A549 (cell line): ENCODE measurements at regions of chr9 and their contacts with region 1.

Region 1: DNA sequence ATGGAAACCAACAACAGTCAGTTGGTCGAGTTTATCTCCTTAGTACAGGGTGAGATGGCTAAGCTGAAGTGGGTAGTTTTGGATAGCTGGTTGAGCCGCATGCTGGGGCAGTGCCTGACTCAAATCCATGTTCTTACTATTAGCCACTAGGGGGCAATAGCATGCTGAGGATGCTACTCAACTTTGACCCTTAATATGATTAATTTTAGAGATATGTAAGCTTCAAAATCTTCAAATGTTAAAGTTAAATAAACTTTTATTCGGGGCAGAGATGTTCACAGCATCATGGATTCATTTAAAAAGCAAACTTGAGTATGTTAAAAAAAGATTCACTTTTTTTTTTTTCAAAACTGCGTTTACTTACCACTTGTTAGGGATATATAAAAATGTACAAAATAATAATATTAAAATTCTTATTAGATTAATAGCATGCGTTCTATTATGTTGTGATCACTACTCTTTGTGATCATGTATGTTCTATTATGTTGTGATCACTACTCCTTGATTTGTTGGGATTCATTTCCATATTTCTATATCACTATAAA is 57.0 kb downstream of the C9orf153 start:
- DNase-seq: peak; percentile 60 to 64
- ATAC-seq: peak; percentile 95 to 97
- H3K4me3 ChIP-seq: no peak overlapping the region
- H3K27ac ChIP-seq: no peak overlapping the region
- H3K4me1 ChIP-seq: no peaks in the 10 kb centered on the region
- CTCF ChIP-seq: peak; percentile 84
- EP300 ChIP-seq: no peak
- POLR2A ChIP-seq: no peak
- RAD21 ChIP-seq: peak; percentile 76 to 80

Region 2: GRCh38 chr9:86098824-86099700 is 103.3 kb before region 1 on chr9 and contains the start of gene GOLM1:
- CTCF ChIA-PET with region 1: interaction called, 20 read pairs
- POLR2A ChIA-PET with region 1: no interaction called
- DNase-seq: peak; percentile 56 to 63
- ATAC-seq: peak; percentile 83 to 89
- H3K4me3 ChIP-seq: peak within 1 kb of the TSS; percentile 60
- H3K27ac ChIP-seq: peak within 1 kb of the TSS; percentile 85 to 96
- H3K4me1 ChIP-seq: peaks cover 49% of the 10 kb centered on the region
- CTCF ChIP-seq: no peak
- EP300 ChIP-seq: no peak
- POLR2A ChIP-seq: peak; percentile 60
- RAD21 ChIP-seq: no peak
- polyA plus RNA-seq, gene GOLM1: 126 and 145 TPM in 2 replicates

Region 3: GRCh38 chr9:86217076-86217755 is 14.8 kb after region 1 on chr9:
- CTCF ChIA-PET with region 1: interaction called, 20 read pairs
- POLR2A ChIA-PET with region 1: no interaction called
- DNase-seq: no peak
- ATAC-seq: no peak
- H3K4me3 ChIP-seq: no peak overlapping the region
- H3K27ac ChIP-seq: no peak overlapping the region
- H3K4me1 ChIP-seq: no peaks in the 10 kb centered on the region
- CTCF ChIP-seq: no peak
- EP300 ChIP-seq: no peak
- POLR2A ChIP-seq: no peak
- RAD21 ChIP-seq: no peak

Region 4: GRCh38 chr9:86230858-86231257 is 28.4 kb after region 1 on chr9:
- CTCF ChIA-PET with region 1: interaction called, 22 read pairs
- POLR2A ChIA-PET with region 1: no interaction called
- DNase-seq: no peak
- ATAC-seq: no peak
- H3K4me3 ChIP-seq: no peak overlapping the region
- H3K27ac ChIP-seq: no peak overlapping the region
- H3K4me1 ChIP-seq: no peaks in the 10 kb centered on the region
- CTCF ChIP-seq: no peak
- EP300 ChIP-seq: no peak
- POLR2A ChIP-seq: no peak
- RAD21 ChIP-seq: no peak

Region 5: GRCh38 chr9:86246752-86247161 is 44.3 kb after region 1 on chr9:
- CTCF ChIA-PET with region 1: interaction called, 26 read pairs
- POLR2A ChIA-PET with region 1: no interaction called
- DNase-seq: peak in 1 of 2 experiments; percentile 14
- ATAC-seq: peak in 1 of 2 experiments; percentile 66; a peak in 3 of 6 replicates
- H3K4me3 ChIP-seq: no peak overlapping the region
- H3K27ac ChIP-seq: no peak overlapping the region
- H3K4me1 ChIP-seq: no peaks in the 10 kb centered on the region
- CTCF ChIP-seq: no peak
- EP300 ChIP-seq: no peak
- POLR2A ChIP-seq: no peak
- RAD21 ChIP-seq: peak in 1 of 2 experiments; percentile 24; a peak in 1 of 5 replicates

Region 6: GRCh38 chr9:86783884-86784283 is 581.5 kb after region 1 on chr9:
- CTCF ChIA-PET with region 1: no interaction called
- POLR2A ChIA-PET with region 1: no interaction called
- DNase-seq: no peak
- ATAC-seq: no peak
- H3K4me3 ChIP-seq: no peak overlapping the region
- H3K27ac ChIP-seq: no peak overlapping the region
- H3K4me1 ChIP-seq: no peaks in the 10 kb centered on the region
- CTCF ChIP-seq: no peak
- EP300 ChIP-seq: no peak
- POLR2A ChIP-seq: no peak
- RAD21 ChIP-seq: no peak